ENCODE measurements at regions of chr9 and their contacts with region 1.

Region 1: DNA sequence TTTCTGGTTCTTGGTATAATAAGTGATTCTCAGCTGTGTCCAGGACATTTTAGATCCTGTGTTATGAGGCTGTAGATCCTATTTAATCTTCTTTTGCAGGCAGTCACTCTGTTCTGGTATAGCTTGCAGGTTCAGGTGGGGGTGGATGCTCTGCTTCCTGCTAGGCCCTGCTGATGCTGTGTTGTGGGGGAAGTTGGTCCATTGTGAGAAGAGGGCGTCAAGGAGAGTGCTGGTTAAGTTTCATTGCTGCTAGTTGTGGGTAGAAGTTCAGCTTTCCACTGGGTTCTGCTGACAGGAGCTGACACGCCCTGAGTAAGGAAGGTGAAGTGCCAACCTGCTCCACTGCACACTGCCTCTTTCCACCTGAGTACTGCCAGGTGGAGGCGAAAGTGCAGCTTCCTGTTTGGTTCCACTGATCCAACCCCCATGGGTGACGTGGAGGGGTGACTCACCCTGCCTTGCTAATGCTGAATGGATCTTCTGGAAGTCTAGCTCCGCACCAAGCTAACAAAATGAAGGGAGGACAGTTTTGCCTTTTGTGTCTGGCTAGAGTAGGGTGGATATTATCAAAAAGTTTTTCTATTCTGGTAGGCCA is 16.3 kb downstream of the NMRK1 start:
- DNase-seq: no peak
- H3K4me3 ChIP-seq: no peak overlapping the region
- CTCF ChIP-seq: no peak

Region 2: DNA sequence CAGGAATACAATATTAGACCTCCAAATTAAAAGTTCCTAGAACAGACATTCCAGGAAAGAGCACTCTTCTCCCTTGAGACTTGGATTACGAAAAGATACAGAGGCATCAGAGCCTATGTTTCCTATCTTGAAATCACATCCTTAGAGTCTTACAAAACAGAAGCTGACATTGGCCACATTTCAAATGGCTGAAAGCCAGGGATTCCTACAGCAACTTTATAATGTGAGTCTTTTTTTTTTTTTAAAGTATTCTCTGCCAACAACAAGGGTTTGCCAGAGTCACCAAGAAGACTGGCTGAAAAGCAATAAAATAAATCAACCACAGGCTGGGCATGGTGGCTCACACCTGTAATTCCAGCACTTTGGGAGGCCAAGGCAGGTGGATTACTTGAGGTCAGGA is 247.0 kb before region 1 on chr9:
- in situ Hi-C with region 1: loop called (anchors 25 kb)
- DNase-seq: no peak
- H3K4me3 ChIP-seq: no peak overlapping the region
- CTCF ChIP-seq: no peak